ENCODE measurements at regions of chrX and their contacts with region 1.

Region 1: DNA sequence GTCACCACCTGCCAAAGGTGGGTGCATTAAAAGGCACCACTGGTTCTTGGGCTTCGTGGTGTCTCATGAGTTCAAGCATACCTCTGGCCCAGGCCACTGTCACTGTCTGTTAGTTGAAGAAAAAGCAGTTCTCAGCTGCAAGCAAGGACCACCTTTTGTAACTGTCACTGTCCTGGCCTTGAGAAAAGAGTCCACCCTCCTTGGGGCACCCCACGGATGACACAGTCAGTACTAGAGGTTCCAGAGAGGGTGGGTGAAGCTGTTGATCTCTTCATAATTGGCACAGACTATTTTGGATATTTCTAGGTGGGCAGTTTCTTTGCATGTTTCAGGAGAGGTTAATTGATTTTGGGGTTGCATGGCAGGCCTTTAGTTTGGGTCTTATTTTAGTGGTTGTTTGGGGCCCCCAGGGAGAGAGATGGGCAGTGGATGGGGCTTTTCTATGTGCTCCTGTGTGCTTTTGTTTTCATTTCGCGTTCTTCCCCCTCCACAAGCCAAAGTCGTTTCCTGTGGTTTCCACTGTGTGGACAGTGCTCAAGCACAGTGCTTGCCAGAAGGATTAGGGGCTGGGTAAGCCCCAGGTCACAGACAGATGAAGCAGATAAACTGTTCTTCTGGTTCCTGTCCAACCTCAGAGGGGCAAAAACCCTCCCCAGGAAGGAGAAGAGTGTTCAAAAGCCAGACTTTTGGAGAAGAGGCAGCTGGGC is 156.2 kb upstream of the PPP1R2C start:
- DNase-seq: peak; percentile 75
- ATAC-seq: peak; percentile 98
- H3K4me3 ChIP-seq: no peak overlapping the region; the same call in 1 of the 2 replicates
- H3K27ac ChIP-seq: peak overlapping the region; percentile 83
- H3K4me1 ChIP-seq: peaks cover 15% of the 10 kb centered on the region
- H3K27me3 ChIP-seq: no peaks in the 10 kb centered on the region
- CTCF ChIP-seq: no peak
- EP300 ChIP-seq: peak in 1 of 2 experiments; percentile 69; a peak in 1 of 4 replicates
- POLR2A ChIP-seq: no peak
- RAD21 ChIP-seq: no peak

Region 2: DNA sequence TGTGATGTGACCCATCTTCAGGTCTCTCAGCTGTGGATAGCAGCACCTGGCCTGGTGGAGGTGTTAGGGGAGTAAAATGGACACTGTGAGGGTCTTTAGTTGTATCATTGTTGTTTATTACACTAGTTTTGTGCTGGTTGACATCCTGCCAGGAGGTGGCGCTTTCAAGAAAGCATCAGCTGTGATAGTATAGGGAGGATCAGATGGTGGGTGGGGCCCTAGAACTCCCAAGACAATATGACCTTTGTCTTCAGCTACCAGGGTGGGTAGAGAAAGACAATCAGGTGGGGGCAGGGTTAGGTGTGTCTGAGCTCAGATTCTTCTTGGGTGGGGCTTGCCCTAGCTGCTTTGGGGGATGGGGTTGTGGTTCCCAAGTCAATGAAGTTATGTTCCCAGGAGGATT is 319.0 kb before region 1 on chrX:
- CTCF ChIA-PET with region 1: no interaction called
- POLR2A ChIA-PET with region 1: no interaction called
- RAD21 ChIA-PET with region 1: no interaction called
- SMC1A ChIA-PET with region 1: no interaction called
- in situ Hi-C with region 1: no loop called
- intact Hi-C with region 1: loop called (anchors 10 kb)
- DNase-seq: no peak
- ATAC-seq: peak; percentile 29; the same call in 1 of the 3 replicates
- H3K4me3 ChIP-seq: no peak overlapping the region
- H3K27ac ChIP-seq: no peak overlapping the region
- H3K4me1 ChIP-seq: no peaks in the 10 kb centered on the region
- H3K27me3 ChIP-seq: no peaks in the 10 kb centered on the region
- CTCF ChIP-seq: peak; percentile 16 to 33 (median 33); a peak in 3 of 6 replicates
- EP300 ChIP-seq: no peak
- POLR2A ChIP-seq: no peak
- RAD21 ChIP-seq: peak; percentile 56

Region 3: DNA sequence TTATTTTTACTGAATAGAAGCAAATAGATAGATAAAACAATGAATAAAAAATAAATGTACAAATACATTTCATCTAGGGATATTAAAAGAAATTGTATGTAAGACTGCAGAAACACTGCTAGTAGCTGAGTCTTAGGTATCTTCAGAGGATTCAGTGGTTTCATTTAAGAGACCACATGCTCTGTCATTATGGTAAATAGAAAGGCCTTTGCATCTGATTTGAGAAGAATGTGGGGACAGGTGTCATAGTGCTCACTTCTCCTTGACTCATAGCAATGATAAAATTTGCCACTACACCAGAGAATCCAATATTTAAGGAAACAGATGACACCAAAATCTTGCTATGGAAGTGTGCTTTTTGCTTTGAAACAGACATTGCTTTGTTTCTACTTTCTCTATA is 96.4 kb before region 1 on chrX:
- CTCF ChIA-PET with region 1: no interaction called
- POLR2A ChIA-PET with region 1: no interaction called
- RAD21 ChIA-PET with region 1: no interaction called
- SMC1A ChIA-PET with region 1: interaction called, 4 read pairs
- in situ Hi-C with region 1: no loop called
- intact Hi-C with region 1: loop called (anchors 10 kb)
- DNase-seq: no peak
- ATAC-seq: peak; percentile 95
- H3K4me3 ChIP-seq: no peak overlapping the region
- H3K27ac ChIP-seq: no peak overlapping the region
- H3K4me1 ChIP-seq: no peaks in the 10 kb centered on the region
- H3K27me3 ChIP-seq: no peaks in the 10 kb centered on the region
- CTCF ChIP-seq: no peak
- EP300 ChIP-seq: no peak
- POLR2A ChIP-seq: no peak
- RAD21 ChIP-seq: no peak

Region 4: GRCh38 chrX:42900947-42901346 is 33.2 kb before region 1 on chrX:
- CTCF ChIA-PET with region 1: no interaction called
- POLR2A ChIA-PET with region 1: no interaction called
- RAD21 ChIA-PET with region 1: no interaction called
- SMC1A ChIA-PET with region 1: no interaction called
- in situ Hi-C with region 1: no loop called
- intact Hi-C with region 1: no loop called
- DNase-seq: no peak
- ATAC-seq: no peak
- H3K4me3 ChIP-seq: no peak overlapping the region
- H3K27ac ChIP-seq: no peak overlapping the region
- H3K4me1 ChIP-seq: no peaks in the 10 kb centered on the region
- H3K27me3 ChIP-seq: no peaks in the 10 kb centered on the region
- CTCF ChIP-seq: no peak
- EP300 ChIP-seq: no peak
- POLR2A ChIP-seq: no peak
- RAD21 ChIP-seq: no peak

Region 5: DNA sequence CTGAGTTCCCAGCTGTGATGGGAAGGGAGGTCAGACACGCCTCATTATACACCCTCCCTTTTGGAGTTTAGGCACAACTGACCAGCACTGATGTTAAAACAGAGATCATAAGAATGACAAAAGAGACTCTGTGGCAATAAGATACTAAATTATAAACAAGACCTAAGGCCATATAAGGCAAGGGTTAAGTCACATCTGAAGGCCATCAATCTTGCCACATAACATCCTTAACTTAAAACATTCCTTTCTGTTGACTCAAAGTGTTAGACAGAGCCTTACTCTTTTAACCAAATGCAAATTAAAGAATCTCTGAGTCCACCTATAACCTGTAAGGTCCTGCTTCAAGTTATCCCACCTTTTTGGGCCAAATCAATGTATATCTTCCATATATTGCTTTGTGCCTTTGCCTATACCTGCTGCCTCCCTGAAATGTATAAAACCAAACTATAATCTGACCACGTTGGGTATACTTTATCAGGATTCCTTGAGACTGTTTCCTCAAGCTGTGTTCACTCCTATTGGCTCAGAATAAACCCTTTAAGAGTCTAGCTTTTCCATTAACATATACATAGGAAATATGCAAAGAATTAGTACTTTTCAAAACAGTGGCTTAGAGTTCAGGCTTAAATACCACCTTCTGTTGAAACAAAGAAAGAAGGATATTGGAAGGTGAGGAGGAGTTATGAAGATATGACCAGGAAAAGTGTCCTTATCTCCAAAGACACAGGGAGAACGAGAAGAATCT is 58.2 kb after region 1 on chrX:
- CTCF ChIA-PET with region 1: no interaction called
- POLR2A ChIA-PET with region 1: no interaction called
- RAD21 ChIA-PET with region 1: no interaction called
- SMC1A ChIA-PET with region 1: no interaction called
- in situ Hi-C with region 1: no loop called
- intact Hi-C with region 1: loop called (anchors 5 kb)
- DNase-seq: no peak
- ATAC-seq: no peak
- H3K4me3 ChIP-seq: no peak overlapping the region
- H3K27ac ChIP-seq: no peak overlapping the region
- H3K4me1 ChIP-seq: peaks cover 3% of the 10 kb centered on the region; the same call in 1 of the 2 replicates
- H3K27me3 ChIP-seq: no peaks in the 10 kb centered on the region
- CTCF ChIP-seq: no peak
- EP300 ChIP-seq: no peak
- POLR2A ChIP-seq: no peak
- RAD21 ChIP-seq: no peak